ENCODE measurements at regions of chr18 and their contacts with region 1.

Region 1: DNA sequence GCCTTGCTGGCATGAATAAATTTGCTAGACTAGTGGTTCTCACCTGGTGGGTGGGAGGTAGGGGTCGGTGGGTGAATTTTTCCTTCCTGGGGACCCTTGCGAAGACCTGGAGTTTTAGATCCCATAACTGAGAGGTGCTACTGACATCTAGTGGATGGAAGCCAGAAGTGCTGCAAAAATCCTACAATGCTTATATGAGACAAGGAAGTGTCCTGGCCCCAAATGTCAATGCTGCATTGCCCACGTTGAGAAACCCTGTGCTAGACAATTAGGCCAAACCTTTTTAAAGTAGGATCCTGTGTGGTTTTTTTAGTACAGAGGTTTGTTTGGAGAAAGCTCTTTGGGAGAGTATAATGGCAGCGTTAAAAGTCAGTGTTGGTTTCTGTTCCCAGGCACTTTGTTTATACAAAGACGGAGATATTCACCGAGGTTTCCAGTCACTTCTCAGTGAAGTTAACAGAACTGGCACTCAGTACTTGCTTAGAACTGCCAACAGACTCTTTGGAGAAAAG is 9.6 kb downstream of the SERPINB8 start:
- DNase-seq: peak; percentile 85
- H3K4me3 Mint-ChIP-seq: peak overlapping the region; percentile 10
- H3K27ac Mint-ChIP-seq: no peak overlapping the region
- H3K4me1 Mint-ChIP-seq: peaks cover 29% of the 10 kb centered on the region
- H3K27me3 Mint-ChIP-seq: no peaks in the 10 kb centered on the region

Region 2: DNA sequence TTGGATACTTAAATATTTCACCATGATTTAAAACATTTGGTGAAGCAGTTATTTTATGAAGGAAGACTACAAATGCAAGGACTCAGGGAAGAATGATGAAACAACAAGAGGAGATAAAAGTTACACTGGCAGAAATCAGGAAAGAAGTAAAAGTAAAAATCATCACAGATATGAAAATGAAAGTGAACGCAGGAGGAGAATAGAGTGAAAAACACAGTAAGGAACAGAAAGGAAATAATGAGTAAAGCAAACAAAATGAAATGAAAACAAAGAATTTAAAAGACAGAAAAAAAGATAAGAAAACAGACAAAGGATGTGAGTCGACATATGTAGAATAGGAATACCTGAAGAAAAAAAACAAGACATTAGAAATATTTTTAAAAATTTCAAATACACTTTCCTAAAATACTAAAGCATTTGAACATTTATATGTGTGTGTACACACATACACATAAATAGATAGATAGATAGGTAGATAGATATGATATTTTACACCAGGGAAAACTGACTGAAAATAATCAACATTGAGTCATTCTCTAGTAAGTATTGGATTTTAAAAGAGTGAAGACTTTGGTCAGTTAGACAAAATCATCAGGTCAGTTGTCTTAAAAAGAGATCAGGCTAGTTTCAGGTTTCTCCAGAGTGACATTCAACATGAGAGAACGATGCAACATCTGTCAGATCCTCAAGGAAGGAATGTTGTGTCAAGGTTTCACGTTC is 600.4 kb before region 1 on chr18:
- intact Hi-C with region 1: no loop called
- DNase-seq: no peak
- H3K4me3 Mint-ChIP-seq: peak overlapping the region; percentile 68
- H3K27ac Mint-ChIP-seq: peak overlapping the region; percentile 82
- H3K4me1 Mint-ChIP-seq: peaks cover 22% of the 10 kb centered on the region
- H3K27me3 Mint-ChIP-seq: no peaks in the 10 kb centered on the region

Region 3: DNA sequence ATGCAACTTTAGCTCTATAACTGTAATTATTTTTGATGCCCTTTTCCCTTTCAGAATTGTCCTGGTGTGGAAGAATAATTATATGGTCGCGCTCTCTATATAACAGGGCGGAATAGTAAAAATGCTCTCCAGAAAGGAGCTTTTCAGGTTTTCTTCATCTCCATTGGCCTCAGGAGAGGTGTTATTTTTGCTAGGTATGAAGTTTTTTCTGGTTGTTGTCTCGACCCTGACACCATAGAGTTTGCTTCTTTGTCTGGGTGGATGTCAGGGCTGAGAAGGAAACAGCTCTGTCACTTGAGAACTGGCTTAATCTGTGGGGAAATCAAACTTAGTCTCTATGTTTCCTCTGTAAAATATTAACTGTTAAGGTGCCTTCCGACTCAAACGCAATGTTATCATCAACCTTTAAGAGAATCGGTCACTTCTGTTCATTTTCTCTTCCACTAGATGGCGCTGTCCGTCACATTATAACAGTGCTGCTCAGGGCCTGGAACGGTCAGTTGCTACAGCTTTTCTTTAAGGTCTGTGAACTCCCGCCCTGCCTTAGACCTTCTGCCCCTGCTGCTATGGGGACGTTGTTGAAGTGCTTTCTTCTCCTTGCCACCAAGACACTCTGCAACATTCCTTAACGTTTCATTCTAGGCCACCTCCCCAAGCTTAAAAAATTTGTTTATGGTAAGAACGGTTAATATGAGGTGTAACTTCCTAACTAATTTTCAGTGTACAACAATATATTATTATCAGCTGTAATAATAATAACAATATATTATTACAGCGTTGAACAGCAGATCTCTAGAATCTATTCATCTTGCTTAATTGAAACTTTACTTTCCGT is 461.1 kb before region 1 on chr18:
- intact Hi-C with region 1: loop called (anchors 2 kb)
- DNase-seq: peak; percentile 88
- H3K4me3 Mint-ChIP-seq: no peak overlapping the region
- H3K27ac Mint-ChIP-seq: no peak overlapping the region
- H3K4me1 Mint-ChIP-seq: no peaks in the 10 kb centered on the region
- H3K27me3 Mint-ChIP-seq: peaks cover 34% of the 10 kb centered on the region

Region 4: GRCh38 chr18:63823518-63824219 is 155.8 kb before region 1 on chr18:
- intact Hi-C with region 1: loop called (anchors 1 kb)
- DNase-seq: peak; percentile 77
- H3K4me3 Mint-ChIP-seq: no peak overlapping the region
- H3K27ac Mint-ChIP-seq: no peak overlapping the region
- H3K4me1 Mint-ChIP-seq: no peaks in the 10 kb centered on the region
- H3K27me3 Mint-ChIP-seq: peaks cover 12% of the 10 kb centered on the region

Region 5: GRCh38 chr18:63890950-63891304 is 88.5 kb before region 1 on chr18:
- intact Hi-C with region 1: loop called (anchors 1 kb)
- DNase-seq: no peak
- H3K4me3 Mint-ChIP-seq: no peak overlapping the region
- H3K27ac Mint-ChIP-seq: no peak overlapping the region
- H3K4me1 Mint-ChIP-seq: peaks cover 6% of the 10 kb centered on the region
- H3K27me3 Mint-ChIP-seq: peaks cover 16% of the 10 kb centered on the region

Region 6: DNA sequence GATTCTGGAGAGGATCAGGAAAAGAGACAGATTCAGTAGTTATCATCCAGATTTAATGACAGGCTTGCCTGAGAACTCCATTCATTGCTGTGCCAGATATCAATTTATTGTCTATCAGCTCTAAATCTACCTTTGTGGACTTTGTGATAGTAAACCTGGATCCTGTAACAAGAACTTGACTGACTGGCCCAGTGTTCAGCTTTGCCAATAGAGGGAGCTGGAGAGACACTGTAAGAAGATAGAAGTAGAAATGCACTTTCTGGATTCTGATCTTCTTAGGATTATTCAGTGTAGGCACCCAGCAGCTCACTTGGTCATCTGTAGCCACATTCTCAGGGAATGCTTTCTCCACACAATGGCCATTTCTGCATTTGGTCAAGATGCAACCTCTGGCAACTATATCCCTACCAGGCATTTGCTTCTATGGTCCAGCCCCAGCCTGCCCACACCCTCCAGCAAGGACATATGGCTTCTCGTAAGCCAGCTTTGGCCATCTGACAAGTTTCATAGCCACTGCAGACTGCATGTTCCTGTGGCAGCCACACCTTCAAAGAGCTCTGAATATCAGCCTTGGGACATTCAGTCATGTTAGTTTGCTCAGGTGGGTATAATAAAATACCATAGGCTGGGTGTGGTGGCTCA is 15.7 kb before region 1 on chr18:
- intact Hi-C with region 1: loop called (anchors 1 kb)
- DNase-seq: peak; percentile 81
- H3K4me3 Mint-ChIP-seq: no peak overlapping the region
- H3K27ac Mint-ChIP-seq: no peak overlapping the region
- H3K4me1 Mint-ChIP-seq: peaks cover 16% of the 10 kb centered on the region
- H3K27me3 Mint-ChIP-seq: no peaks in the 10 kb centered on the region